Mammary epithelial cell (primary cell): ENCODE measurements at regions of chr17 and their contacts with region 1.

Region 1: DNA sequence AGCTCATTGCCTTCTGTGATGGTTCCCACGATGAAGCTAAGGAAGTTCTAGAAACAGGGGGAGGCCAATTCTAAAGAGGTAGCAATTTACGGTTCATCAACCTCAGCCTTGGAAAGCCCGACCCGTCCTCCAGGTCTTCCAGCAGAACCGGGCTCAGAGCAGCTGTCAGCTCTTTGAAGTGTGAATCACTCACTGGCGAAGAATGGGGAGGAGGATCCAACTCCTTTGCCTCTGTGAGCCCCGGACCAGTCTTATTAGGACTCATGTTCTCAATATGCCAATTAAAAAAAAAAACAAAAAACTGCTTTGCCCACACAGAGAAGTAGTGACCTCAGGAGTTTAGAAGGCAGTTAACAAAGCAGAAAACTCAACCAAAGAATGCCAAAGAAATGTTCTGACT is 31.4 kb downstream of the STX8 start:
- DNase-seq: no peak
- H3K4me3 ChIP-seq: no peak overlapping the region
- H3K27ac ChIP-seq: no peak overlapping the region
- H3K4me1 ChIP-seq: no peaks in the 10 kb centered on the region
- H3K27me3 ChIP-seq: no peaks in the 10 kb centered on the region
- CTCF ChIP-seq: no peak

Region 2: GRCh38 chr17:9557161-9557755 is 13.0 kb after region 1 on chr17:
- CTCF ChIA-PET with region 1: interaction called, 19 read pairs
- dilution Hi-C with region 1: no loop called
- in situ Hi-C with region 1: no loop called
- intact Hi-C with region 1: no loop called
- DNase-seq: no peak
- H3K4me3 ChIP-seq: no peak overlapping the region
- H3K27ac ChIP-seq: no peak overlapping the region
- H3K4me1 ChIP-seq: no peaks in the 10 kb centered on the region
- H3K27me3 ChIP-seq: no peaks in the 10 kb centered on the region
- CTCF ChIP-seq: no peak